Naive thymus-derived CD4-positive, alpha-beta T cell (primary cell): ENCODE measurements at regions of chr9 and their contacts with region 1.

Region 1: GRCh38 chr9:130682490-130683121 is 11.0 kb upstream of the EXOSC2 start:
- DNase-seq: peak in 8 of 9 donors; percentile 23 to 67 (median 44)
- ATAC-seq: peak; percentile 56
- H3K4me3 ChIP-seq: peak overlapping the region; percentile 75
- H3K4me3 Mint-ChIP-seq: peak overlapping the region; percentile 87 to 100 (median 92)
- H3K27ac ChIP-seq: no peak overlapping the region
- H3K27ac Mint-ChIP-seq: peak overlapping the region in 8 of 9 donors; percentile 3 to 69 (median 39)
- H3K4me1 ChIP-seq: no peaks in the 10 kb centered on the region
- H3K4me1 Mint-ChIP-seq: peaks cover 3 to 11% (median 8%) of the 10 kb centered on the region in 7 donors
- H3K27me3 ChIP-seq: no peaks in the 10 kb centered on the region
- H3K27me3 Mint-ChIP-seq: peaks cover 0 to 43% (median 5%) of the 10 kb centered on the region in 5 donors

Region 2: DNA sequence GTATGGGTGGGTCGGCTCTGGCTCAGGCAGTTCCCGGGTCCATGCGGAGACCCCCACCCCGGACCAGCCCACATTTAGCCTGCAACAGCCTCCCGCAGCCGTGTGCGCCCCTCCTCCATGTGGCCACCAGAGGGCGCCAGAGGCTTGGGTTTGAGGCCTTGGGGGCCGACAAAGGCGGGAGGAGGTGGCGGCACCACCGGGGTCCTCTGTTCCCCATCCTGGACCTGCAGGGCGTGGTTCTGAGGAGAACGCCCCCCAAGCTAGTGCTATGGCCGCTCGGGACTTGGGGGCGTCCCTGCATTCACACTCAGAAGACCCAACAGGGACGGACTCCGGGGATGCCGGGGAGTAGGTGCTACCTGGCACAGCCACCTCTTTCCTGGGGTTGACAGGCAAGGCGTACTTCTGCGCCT is 221.4 kb before region 1 on chr9:
- CTCF ChIA-PET with region 1: interaction called, 87 read pairs
- POLR2A ChIA-PET with region 1: no interaction called
- intact Hi-C with region 1: loop called (anchors 1 kb)
- DNase-seq: peak; percentile 25 to 79 (median 62)
- ATAC-seq: peak; percentile 75
- H3K4me3 ChIP-seq: no peak overlapping the region
- H3K4me3 Mint-ChIP-seq: no peak overlapping the region
- H3K27ac ChIP-seq: no peak overlapping the region
- H3K27ac Mint-ChIP-seq: no peak overlapping the region
- H3K4me1 ChIP-seq: no peaks in the 10 kb centered on the region
- H3K4me1 Mint-ChIP-seq: peaks cover 0 to 1% (median 0%) of the 10 kb centered on the region in 7 donors
- H3K27me3 ChIP-seq: peaks cover 0 to 4% of the 10 kb centered on the region in 2 donors
- H3K27me3 Mint-ChIP-seq: peaks cover 7 to 33% (median 14%) of the 10 kb centered on the region in 5 donors

Region 3: GRCh38 chr9:130667120-130667435 is 15.5 kb before region 1 on chr9:
- CTCF ChIA-PET with region 1: no interaction called
- POLR2A ChIA-PET with region 1: no interaction called
- intact Hi-C with region 1: no loop called
- DNase-seq: no peak
- ATAC-seq: no peak
- H3K4me3 ChIP-seq: no peak overlapping the region
- H3K4me3 Mint-ChIP-seq: peak overlapping the region in 1 of 10 donors; percentile 91
- H3K27ac ChIP-seq: no peak overlapping the region
- H3K27ac Mint-ChIP-seq: no peak overlapping the region
- H3K4me1 ChIP-seq: peaks cover 6 to 18% of the 10 kb centered on the region in 2 donors
- H3K4me1 Mint-ChIP-seq: peaks cover 6 to 26% (median 21%) of the 10 kb centered on the region in 7 donors
- H3K27me3 ChIP-seq: peaks cover 3 to 25% of the 10 kb centered on the region in 2 donors
- H3K27me3 Mint-ChIP-seq: peaks cover 29 to 69% (median 36%) of the 10 kb centered on the region in 5 donors

Region 4: DNA sequence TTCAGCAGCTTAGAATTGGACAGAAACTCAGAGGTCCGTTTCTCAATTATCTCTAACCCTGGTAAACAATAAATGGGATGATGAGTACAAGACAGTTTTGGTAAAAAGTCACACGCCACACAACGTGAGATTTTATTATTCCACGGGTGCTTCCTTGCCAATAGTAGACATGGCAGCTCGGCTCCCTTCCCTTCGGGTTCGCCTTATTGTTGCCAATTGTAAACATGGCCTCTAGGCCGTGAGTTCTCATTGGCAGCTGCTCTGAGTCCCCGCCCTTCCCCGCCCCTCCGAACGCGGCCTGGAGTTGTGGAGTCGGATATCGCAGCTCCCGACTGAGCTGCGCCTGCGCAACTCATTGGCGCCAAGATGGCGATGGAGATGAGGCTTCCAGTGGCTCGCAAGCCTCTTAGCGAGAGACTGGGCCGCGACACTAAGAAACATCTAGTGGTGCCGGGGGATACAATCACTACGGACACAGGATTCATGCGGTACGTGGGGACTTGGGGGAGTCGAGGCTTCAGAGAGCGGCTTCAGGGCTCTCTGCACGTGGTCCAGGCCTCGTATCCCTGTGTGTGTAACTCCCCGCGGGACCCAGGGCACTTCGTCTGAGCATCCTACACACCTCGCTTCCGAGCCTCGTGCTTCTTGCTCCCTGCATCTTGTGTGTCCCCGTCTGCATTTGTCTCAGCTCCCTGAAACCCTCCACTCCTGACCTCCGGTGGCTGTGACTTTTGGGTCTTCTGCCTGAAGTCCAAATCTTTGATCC is 11.0 kb after region 1 on chr9 and contains the start of gene EXOSC2:
- CTCF ChIA-PET with region 1: interaction called, 9 read pairs
- POLR2A ChIA-PET with region 1: interaction called, 9 read pairs
- intact Hi-C with region 1: loop called in 1 of 2 experiments (anchors 1 kb)
- DNase-seq: peak; percentile 76 to 99 (median 89)
- ATAC-seq: peak; percentile 100
- H3K4me3 ChIP-seq: peak within 1 kb of the TSS; percentile 91
- H3K4me3 Mint-ChIP-seq: peak within 1 kb of the TSS; percentile 83 to 98 (median 95)
- H3K27ac ChIP-seq: peak within 1 kb of the TSS; percentile 85
- H3K27ac Mint-ChIP-seq: peak within 1 kb of the TSS; percentile 88 to 97 (median 94)
- H3K4me1 ChIP-seq: peaks cover 13 to 20% of the 10 kb centered on the region in 2 donors
- H3K4me1 Mint-ChIP-seq: peaks cover 20 to 54% (median 46%) of the 10 kb centered on the region in 7 donors
- H3K27me3 ChIP-seq: no peaks in the 10 kb centered on the region
- H3K27me3 Mint-ChIP-seq: no peaks in the 10 kb centered on the region
- total RNA-seq, gene EXOSC2: 44.2 to 60.7 (median 59.5) TPM

Region 5: DNA sequence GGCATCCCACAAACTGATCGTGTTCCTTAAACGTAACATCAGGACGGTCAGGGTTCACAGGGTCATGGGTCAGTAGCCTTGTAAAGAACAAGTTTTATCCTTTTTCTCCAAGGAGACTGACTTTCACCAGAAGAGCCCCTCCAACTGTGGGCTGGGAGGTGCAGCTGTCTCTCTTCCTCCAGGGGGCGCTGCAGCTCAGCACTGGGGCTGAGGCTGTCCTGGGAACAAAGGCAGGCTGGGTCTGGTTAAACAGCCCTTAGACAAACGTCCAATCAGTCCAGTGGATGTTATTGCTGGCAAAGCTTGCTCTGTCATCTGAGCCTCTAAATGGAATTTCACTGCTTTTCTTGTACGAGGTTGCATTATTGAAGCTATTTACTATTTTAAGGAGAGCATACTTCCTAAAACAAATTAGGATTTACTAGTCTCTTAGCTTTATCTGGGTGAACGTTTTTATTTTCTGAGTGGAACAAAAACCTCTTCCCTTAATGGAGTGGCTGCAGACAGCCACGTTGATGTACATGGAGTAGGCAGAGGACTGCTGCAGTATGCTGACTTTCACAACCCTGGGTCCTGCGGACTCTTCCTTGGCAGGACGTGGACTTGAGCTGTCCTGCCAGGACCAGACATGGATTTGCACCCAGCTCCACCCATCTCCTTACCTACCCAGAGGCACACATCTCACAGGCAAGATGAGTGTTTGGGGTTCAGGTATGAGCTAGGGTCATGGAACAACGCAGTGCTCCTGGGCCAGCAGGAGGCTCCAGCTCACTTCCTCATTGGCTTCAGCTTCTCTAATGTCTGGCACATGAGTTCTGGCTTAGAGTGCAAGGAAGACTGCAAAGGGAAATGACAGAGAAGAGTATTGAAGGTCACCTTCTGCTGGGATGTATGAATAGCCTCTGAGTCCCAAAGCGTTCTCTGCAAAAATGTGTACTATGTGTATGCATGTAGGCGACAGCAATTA is 18.7 kb after region 1 on chr9:
- CTCF ChIA-PET with region 1: interaction called, 11 read pairs
- POLR2A ChIA-PET with region 1: interaction called, 4 read pairs
- intact Hi-C with region 1: no loop called
- DNase-seq: peak; percentile 36 to 76 (median 63)
- ATAC-seq: peak; percentile 90
- H3K4me3 ChIP-seq: no peak overlapping the region
- H3K4me3 Mint-ChIP-seq: no peak overlapping the region
- H3K27ac ChIP-seq: no peak overlapping the region
- H3K27ac Mint-ChIP-seq: peak overlapping the region in 2 of 9 donors; percentile 12 to 48
- H3K4me1 ChIP-seq: peaks cover 0 to 1% of the 10 kb centered on the region in 2 donors
- H3K4me1 Mint-ChIP-seq: peaks cover 11 to 28% (median 17%) of the 10 kb centered on the region in 7 donors
- H3K27me3 ChIP-seq: no peaks in the 10 kb centered on the region
- H3K27me3 Mint-ChIP-seq: no peaks in the 10 kb centered on the region

Region 6: DNA sequence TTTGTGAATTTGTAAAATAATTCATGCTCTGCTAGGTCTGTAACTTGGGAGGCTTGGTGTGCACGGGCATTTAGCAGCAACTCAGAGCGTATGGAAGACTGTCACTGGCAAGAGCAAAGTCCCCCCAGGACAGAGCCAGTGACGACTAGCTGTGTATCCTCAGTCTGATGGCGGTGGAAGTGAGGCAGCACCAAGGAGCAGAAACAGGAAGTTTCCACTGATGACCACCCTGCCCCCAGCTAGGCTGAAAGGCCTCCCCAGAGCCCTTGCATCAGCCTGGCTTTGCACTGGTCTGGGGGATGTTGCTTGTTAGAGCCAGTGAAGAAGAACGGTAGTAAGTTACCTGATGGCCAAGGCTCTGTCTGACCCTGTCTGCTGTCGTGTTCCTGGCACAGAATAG is 85.7 kb after region 1 on chr9:
- CTCF ChIA-PET with region 1: no interaction called
- POLR2A ChIA-PET with region 1: no interaction called
- intact Hi-C with region 1: no loop called
- DNase-seq: no peak
- ATAC-seq: peak; percentile 36
- H3K4me3 ChIP-seq: no peak overlapping the region
- H3K4me3 Mint-ChIP-seq: no peak overlapping the region
- H3K27ac ChIP-seq: no peak overlapping the region
- H3K27ac Mint-ChIP-seq: peak overlapping the region in 2 of 9 donors; percentile 10 to 56
- H3K4me1 ChIP-seq: peaks cover 0 to 8% of the 10 kb centered on the region in 2 donors
- H3K4me1 Mint-ChIP-seq: peaks cover 26 to 57% (median 48%) of the 10 kb centered on the region in 7 donors
- H3K27me3 ChIP-seq: no peaks in the 10 kb centered on the region
- H3K27me3 Mint-ChIP-seq: no peaks in the 10 kb centered on the region

Region 7: DNA sequence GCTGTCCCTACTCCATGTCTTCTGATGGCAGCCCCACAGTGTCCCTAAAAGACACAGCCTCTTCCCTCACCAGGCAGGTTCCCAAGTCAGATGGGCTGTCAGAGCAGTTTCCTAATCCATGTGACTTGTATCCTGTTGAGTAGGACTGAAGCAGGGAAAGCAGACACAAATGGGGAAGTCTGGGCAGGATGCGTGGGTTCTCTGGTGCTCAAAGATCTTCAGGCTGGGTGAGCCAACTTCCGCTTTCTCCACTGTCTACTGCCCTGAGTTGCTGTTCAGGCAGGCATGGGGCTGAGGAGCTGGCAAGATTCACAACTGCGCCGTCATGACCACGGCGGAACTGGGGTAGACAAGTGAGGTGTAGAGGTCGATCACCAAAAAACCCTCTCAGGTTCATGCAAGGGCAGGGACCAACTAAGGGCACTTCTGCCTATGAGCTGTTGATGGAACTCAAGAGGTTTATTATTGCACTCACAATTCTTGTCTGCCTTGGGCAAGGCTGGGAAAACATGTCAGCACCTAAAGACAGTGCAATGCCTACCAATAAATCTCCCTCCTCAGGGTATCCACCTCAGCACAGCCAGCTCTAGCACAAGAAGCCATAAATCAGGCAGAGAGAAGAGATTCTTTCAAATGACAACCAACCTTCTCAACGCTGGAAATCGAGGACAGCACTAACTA is 973.9 kb after region 1 on chr9:
- CTCF ChIA-PET with region 1: no interaction called
- POLR2A ChIA-PET with region 1: no interaction called
- intact Hi-C with region 1: no loop called
- DNase-seq: peak in 8 of 9 donors; percentile 40 to 70 (median 50)
- ATAC-seq: peak; percentile 93
- H3K4me3 ChIP-seq: no peak overlapping the region
- H3K4me3 Mint-ChIP-seq: peak overlapping the region; percentile 18 to 69 (median 61)
- H3K27ac ChIP-seq: peak overlapping the region; percentile 49
- H3K27ac Mint-ChIP-seq: peak overlapping the region; percentile 77 to 94 (median 88)
- H3K4me1 ChIP-seq: peaks cover 20 to 28% of the 10 kb centered on the region in 2 donors
- H3K4me1 Mint-ChIP-seq: peaks cover 56 to 88% (median 72%) of the 10 kb centered on the region in 7 donors
- H3K27me3 ChIP-seq: no peaks in the 10 kb centered on the region
- H3K27me3 Mint-ChIP-seq: no peaks in the 10 kb centered on the region